GM13977 (cell line): ENCODE measurements at regions of chr1 and their contacts with region 1.

Region 1: GRCh38 chr1:94854458-94855306 is 34.5 kb downstream of the SLC44A3 start:
- DNase-seq: peak; percentile 88
- CTCF ChIP-seq: peak; percentile 90

Region 2: DNA sequence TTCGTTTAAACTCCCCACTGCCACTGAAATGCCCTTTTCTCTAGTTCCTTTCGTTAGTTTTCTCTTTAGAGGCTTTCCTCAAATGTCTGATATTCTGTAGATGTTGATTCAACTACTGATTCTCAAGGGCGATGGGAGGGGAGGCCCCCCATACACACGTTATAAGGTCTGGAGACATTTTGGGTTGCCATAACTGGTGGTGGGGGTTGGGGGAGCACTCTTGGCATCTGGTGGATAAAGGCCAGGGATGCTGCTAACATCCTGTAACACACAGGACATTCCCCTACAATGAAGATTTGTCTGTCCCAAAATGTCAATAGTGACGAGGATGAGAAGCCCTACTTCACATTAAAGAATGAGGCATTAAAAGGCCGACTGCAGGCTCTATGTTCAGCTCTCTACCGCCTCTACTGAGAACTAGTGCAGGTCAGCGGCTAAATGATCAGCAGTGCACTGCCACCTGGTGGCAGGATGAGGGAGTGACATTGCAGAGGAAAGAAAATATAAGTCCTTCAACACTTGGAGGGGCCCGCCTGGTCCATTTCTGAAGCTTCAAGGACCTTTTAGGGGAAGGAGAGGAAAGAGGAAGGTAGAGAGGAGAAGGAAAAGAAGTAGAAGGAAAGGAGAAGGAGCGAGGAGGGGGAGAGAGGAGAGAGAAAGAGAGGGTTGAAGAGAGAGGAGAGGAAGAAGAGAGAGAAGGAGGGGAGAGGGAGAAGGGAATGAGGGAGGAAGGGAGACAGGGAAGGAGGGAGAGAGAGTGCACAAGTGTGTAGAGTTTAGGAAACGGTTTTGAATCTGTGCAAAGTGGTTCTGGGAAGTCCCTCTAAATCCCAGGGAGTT is 188.7 kb after region 1 on chr1:
- in situ Hi-C with region 1: loop called (anchors 10 kb)
- DNase-seq: peak; percentile 76
- CTCF ChIP-seq: peak; percentile 97

Region 3: DNA sequence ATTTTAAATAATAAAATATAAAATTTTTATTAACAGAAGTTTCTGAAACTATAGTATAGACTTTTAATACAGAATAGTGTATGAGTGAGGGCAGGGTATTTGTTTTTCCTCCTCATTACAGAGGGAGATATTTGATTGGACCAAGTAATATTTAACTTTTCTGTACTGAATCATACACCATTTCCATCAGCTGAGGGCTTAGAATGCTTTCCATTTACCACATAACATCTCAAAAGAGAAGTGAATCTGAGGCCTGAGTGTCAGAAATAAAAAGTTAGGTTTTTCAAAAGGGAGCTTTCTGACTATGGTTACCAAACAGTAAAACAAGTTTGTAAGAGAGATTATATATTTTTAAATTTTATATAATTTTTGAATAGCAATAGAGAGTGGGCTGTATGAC is 292.0 kb after region 1 on chr1:
- in situ Hi-C with region 1: no loop called
- DNase-seq: no peak
- CTCF ChIP-seq: no peak